ENCODE measurements at regions of chr15 and their contacts with region 1.

Region 1: GRCh38 chr15:56496635-56497034 is 31.7 kb upstream of the MNS1 start:
- DNase-seq: no peak
- H3K4me3 Mint-ChIP-seq: no peak overlapping the region
- H3K27ac Mint-ChIP-seq: no peak overlapping the region
- H3K4me1 Mint-ChIP-seq: peaks cover 6% of the 10 kb centered on the region
- H3K27me3 Mint-ChIP-seq: peaks cover 16% of the 10 kb centered on the region

Region 2: GRCh38 chr15:56176996-56177395 is 319.6 kb before region 1 on chr15:
- intact Hi-C with region 1: no loop called
- DNase-seq: no peak
- H3K4me3 Mint-ChIP-seq: no peak overlapping the region
- H3K27ac Mint-ChIP-seq: no peak overlapping the region
- H3K4me1 Mint-ChIP-seq: peaks cover 32% of the 10 kb centered on the region
- H3K27me3 Mint-ChIP-seq: no peaks in the 10 kb centered on the region

Region 3: GRCh38 chr15:56568466-56569167 is 72.0 kb after region 1 on chr15:
- intact Hi-C with region 1: no loop called
- DNase-seq: no peak
- H3K4me3 Mint-ChIP-seq: no peak overlapping the region
- H3K27ac Mint-ChIP-seq: no peak overlapping the region
- H3K4me1 Mint-ChIP-seq: no peaks in the 10 kb centered on the region
- H3K27me3 Mint-ChIP-seq: peaks cover 15% of the 10 kb centered on the region

Region 4: GRCh38 chr15:56616529-56616928 is 119.9 kb after region 1 on chr15:
- intact Hi-C with region 1: no loop called
- DNase-seq: no peak
- H3K4me3 Mint-ChIP-seq: no peak overlapping the region
- H3K27ac Mint-ChIP-seq: no peak overlapping the region
- H3K4me1 Mint-ChIP-seq: peaks cover 14% of the 10 kb centered on the region
- H3K27me3 Mint-ChIP-seq: peaks cover 15% of the 10 kb centered on the region

Region 5: GRCh38 chr15:56869573-56869972 is 372.9 kb after region 1 on chr15:
- intact Hi-C with region 1: loop called (anchors 1 kb)
- DNase-seq: peak; percentile 8
- H3K4me3 Mint-ChIP-seq: no peak overlapping the region
- H3K27ac Mint-ChIP-seq: no peak overlapping the region
- H3K4me1 Mint-ChIP-seq: no peaks in the 10 kb centered on the region
- H3K27me3 Mint-ChIP-seq: peaks cover 12% of the 10 kb centered on the region

Region 6: GRCh38 chr15:57146506-57147201 is 650.0 kb after region 1 on chr15:
- intact Hi-C with region 1: loop called (anchors 2 kb)
- DNase-seq: no peak
- H3K4me3 Mint-ChIP-seq: no peak overlapping the region
- H3K27ac Mint-ChIP-seq: no peak overlapping the region
- H3K4me1 Mint-ChIP-seq: peaks cover 11% of the 10 kb centered on the region
- H3K27me3 Mint-ChIP-seq: no peaks in the 10 kb centered on the region

Region 7: GRCh38 chr15:57527382-57528091 is 1030.9 kb after region 1 on chr15:
- intact Hi-C with region 1: loop called (anchors 2 kb)
- DNase-seq: peak; percentile 7
- H3K4me3 Mint-ChIP-seq: no peak overlapping the region
- H3K27ac Mint-ChIP-seq: no peak overlapping the region
- H3K4me1 Mint-ChIP-seq: no peaks in the 10 kb centered on the region
- H3K27me3 Mint-ChIP-seq: peaks cover 14% of the 10 kb centered on the region